Endothelial cell of umbilical vein (primary cell): ENCODE measurements at regions of chr19 and their contacts with region 1.

Region 1: GRCh38 chr19:1470203-1471009 is 8.6 kb downstream of the C19orf25 start:
- DNase-seq: no peak
- H3K4me3 ChIP-seq: no peak overlapping the region
- H3K27ac ChIP-seq: no peak overlapping the region
- H3K4me1 ChIP-seq: peaks cover 5% of the 10 kb centered on the region
- H3K27me3 ChIP-seq: peaks cover 42 to 78% of the 10 kb centered on the region in 2 experiments
- CTCF ChIP-seq: no peak
- POLR2A ChIP-seq: no peak

Region 2: GRCh38 chr19:1383311-1384084 is 86.9 kb before region 1 on chr19 and contains the start of gene NDUFS7:
- CTCF ChIA-PET with region 1: no interaction called
- POLR2A ChIA-PET with region 1: no interaction called
- dilution Hi-C with region 1: no loop called
- intact Hi-C with region 1: no loop called
- DNase-seq: peak; percentile 89
- H3K4me3 ChIP-seq: peak within 1 kb of the TSS; percentile 69 to 84 (median 73)
- H3K27ac ChIP-seq: peak within 1 kb of the TSS; percentile 18
- H3K4me1 ChIP-seq: peaks cover 7% of the 10 kb centered on the region
- H3K27me3 ChIP-seq: no peaks in the 10 kb centered on the region
- CTCF ChIP-seq: peak in 1 of 2 donors; percentile 21
- POLR2A ChIP-seq: no peak
- total RNA-seq, gene NDUFS7: 95.8 and 101 TPM in 2 replicates

Region 3: DNA sequence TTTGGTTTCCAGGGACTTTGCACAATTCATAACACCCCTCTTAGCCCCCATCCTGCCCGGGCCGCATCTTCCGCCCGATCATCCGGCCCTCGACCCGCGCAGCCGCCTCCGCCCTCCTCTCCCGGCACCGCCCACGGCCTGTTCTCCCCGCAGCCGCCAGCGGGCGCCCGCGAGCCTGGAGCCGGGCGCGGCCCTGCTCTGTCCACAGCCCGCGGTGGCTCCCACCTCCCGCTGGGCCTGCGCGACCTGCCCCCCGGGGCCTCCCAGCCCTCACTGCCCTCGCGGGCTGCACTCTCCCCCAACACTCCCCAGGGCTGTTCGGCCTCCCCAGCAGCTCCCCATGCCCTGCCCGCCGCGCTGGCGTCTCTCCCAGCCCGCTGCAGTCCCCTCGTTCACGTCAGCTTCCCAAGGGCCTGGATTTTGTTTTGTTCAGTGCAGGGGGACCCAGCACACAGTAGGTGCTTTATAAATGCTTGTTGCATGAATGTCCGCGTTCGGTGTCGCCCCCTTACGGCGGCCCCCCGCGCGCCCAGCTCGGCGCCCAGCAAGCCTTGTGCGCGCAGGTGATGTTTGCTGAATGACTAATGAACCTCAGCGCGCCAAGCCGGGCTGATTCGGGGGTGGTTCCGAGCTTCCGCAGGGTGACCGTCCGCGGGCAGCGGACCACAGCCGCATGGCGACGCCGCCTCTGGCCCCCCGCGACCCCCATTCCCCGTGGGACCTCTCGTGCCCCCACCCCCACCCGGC is 25.0 kb before region 1 on chr19:
- CTCF ChIA-PET with region 1: interaction called, 11 read pairs
- POLR2A ChIA-PET with region 1: no interaction called
- dilution Hi-C with region 1: no loop called
- intact Hi-C with region 1: no loop called
- DNase-seq: peak; percentile 52
- H3K4me3 ChIP-seq: peak overlapping the region in 1 of 3 experiments; percentile 14
- H3K27ac ChIP-seq: no peak overlapping the region
- H3K4me1 ChIP-seq: no peaks in the 10 kb centered on the region
- H3K27me3 ChIP-seq: peaks cover 14 to 33% of the 10 kb centered on the region in 2 experiments
- CTCF ChIP-seq: peak; percentile 81 to 96
- POLR2A ChIP-seq: no peak

Region 4: GRCh38 chr19:1490311-1491113 is 20.1 kb after region 1 on chr19 and contains the start of gene PCSK4:
- CTCF ChIA-PET with region 1: interaction called, 8 read pairs
- POLR2A ChIA-PET with region 1: no interaction called
- dilution Hi-C with region 1: no loop called
- intact Hi-C with region 1: loop called (anchors 2 kb)
- DNase-seq: peak; percentile 99
- H3K4me3 ChIP-seq: peak within 1 kb of the TSS; percentile 11 to 51 (median 35)
- H3K27ac ChIP-seq: no peak within 1 kb of the TSS
- H3K4me1 ChIP-seq: peaks cover 10% of the 10 kb centered on the region
- H3K27me3 ChIP-seq: peaks cover 0 to 6% of the 10 kb centered on the region in 2 experiments
- CTCF ChIP-seq: no peak
- POLR2A ChIP-seq: peak; percentile 8
- total RNA-seq, gene PCSK4: 0.92 and 1.2 TPM in 2 replicates